Tibial artery (tissue), 4 donors: ENCODE measurements at regions of chr12 and their contacts with region 1.

Region 1: GRCh38 chr12:110600254-110600653 is 13.7 kb upstream of the TCTN1 start:
- DNase-seq: no peak
- H3K4me3 ChIP-seq: no peak overlapping the region
- H3K27ac ChIP-seq: no peak overlapping the region
- H3K4me1 ChIP-seq: no peaks in the 10 kb centered on the region
- H3K27me3 ChIP-seq: no peaks in the 10 kb centered on the region
- CTCF ChIP-seq: peak; percentile 41 to 76

Region 2: DNA sequence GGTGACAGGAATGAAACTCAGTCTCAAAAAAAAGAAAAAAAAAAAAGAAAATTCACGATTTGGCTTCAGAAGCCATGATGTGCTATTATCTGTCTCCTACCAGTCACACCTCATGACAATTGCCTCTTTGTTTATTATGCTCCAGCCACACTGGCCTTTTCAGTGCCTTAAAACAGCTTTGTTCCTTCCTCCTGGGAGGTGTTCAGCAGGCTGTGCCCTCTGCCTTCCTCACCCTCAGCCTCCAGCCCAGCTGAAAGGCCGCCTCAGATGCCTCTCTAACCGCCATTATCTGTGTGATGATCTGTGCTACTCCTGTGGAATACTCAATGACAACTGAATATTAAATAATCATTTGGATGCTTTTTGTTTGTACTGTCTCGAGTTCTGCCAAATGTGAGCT is 141.5 kb before region 1 on chr12:
- intact Hi-C with region 1: loop called (anchors 5 kb)
- DNase-seq: no peak
- H3K4me3 ChIP-seq: no peak overlapping the region
- H3K27ac ChIP-seq: no peak overlapping the region
- H3K4me1 ChIP-seq: no peaks in the 10 kb centered on the region
- H3K27me3 ChIP-seq: no peaks in the 10 kb centered on the region
- CTCF ChIP-seq: no peak

Region 3: GRCh38 chr12:110508071-110508586 is 92.1 kb before region 1 on chr12:
- intact Hi-C with region 1: loop called (anchors 1 kb)
- DNase-seq: no peak
- H3K4me3 ChIP-seq: no peak overlapping the region
- H3K27ac ChIP-seq: no peak overlapping the region
- H3K4me1 ChIP-seq: peaks cover 0 to 5% (median 0%) of the 10 kb centered on the region in 4 donors
- H3K27me3 ChIP-seq: no peaks in the 10 kb centered on the region
- CTCF ChIP-seq: no peak

Region 4: GRCh38 chr12:110513842-110514241 is 86.4 kb before region 1 on chr12:
- intact Hi-C with region 1: loop called (anchors 1 kb)
- DNase-seq: no peak
- H3K4me3 ChIP-seq: no peak overlapping the region
- H3K27ac ChIP-seq: no peak overlapping the region
- H3K4me1 ChIP-seq: peaks cover 0 to 5% (median 0%) of the 10 kb centered on the region in 4 donors
- H3K27me3 ChIP-seq: no peaks in the 10 kb centered on the region
- CTCF ChIP-seq: no peak

Region 5: DNA sequence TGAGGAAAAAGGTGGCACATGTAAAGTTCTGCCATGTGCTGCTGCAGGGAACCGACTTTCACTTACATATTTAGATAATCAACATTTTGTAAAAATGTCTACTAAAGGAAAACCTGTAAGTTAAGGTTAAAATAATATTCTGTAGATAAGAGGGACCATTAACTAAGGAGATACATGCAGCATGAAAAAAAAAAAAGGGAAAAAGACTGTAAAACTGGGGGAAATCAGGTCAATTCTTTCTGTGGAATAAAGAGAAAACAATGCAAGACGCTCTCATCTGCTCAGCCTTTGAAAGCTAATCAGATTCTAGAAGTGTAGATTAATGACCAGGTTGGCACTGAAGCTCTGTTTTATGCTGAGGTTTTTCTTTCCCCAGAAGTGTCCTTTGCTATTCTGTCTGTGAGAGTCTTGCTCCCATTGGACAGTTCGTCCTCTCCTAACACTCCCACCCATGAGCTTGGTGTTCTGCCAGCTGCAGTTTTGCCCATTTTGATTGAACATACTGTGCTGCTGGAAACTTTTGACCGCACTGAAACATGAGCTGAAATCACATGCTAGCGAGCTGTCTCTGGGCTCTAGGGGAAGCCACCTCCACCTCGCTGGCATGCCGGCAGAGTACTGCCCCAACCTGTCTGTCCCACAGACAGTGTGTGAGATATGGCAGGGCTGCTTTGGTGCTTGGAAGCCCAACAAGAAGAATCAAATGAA is 56.8 kb before region 1 on chr12:
- intact Hi-C with region 1: no loop called
- DNase-seq: peak; percentile 97
- H3K4me3 ChIP-seq: peak overlapping the region in 1 of 2 donors; percentile 4
- H3K27ac ChIP-seq: peak overlapping the region; percentile 78 to 87
- H3K4me1 ChIP-seq: peaks cover 0 to 65% (median 44%) of the 10 kb centered on the region in 4 donors
- H3K27me3 ChIP-seq: no peaks in the 10 kb centered on the region
- CTCF ChIP-seq: no peak